Mammary epithelial cell (primary cell): ENCODE measurements at regions of chr6 and their contacts with region 1.

Region 1: DNA sequence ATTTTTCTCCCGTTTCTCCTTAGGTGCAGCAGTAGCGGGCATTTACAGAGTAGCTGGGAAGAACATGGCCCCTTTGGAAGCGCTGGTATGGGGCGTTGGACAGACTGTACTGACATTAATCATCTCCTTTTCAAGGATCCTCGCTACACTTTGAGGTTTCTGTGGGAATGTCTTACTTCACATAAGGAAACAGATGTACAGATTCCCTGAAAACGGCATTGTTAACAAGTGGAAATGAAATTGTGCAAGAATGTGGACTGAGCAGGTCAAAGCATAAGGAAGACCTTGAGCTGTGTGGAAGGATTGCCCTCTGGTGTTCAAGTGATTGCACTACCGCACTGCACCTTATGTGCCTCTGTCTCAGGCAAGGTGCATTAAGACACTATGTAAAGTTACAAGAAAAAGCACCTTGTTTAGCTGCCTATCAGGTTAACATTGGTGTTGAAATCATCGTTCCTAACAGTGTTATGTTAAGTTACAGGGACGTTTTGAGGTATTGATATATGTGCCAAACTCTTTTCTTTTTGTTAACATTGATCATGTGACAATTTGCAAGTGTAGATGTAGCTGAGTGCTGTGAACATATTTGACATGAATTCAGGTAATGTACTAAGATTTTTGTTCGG is 38.0 kb downstream of the TMEM170B start:
- DNase-seq: peak; percentile 67
- H3K4me3 ChIP-seq: no peak overlapping the region
- H3K27ac ChIP-seq: no peak overlapping the region
- H3K4me1 ChIP-seq: no peaks in the 10 kb centered on the region
- H3K27me3 ChIP-seq: no peaks in the 10 kb centered on the region
- CTCF ChIP-seq: peak; percentile 98 to 99

Region 2: GRCh38 chr6:10478187-10479040 is 1097.1 kb before region 1 on chr6:
- CTCF ChIA-PET with region 1: no interaction called
- dilution Hi-C with region 1: no loop called
- in situ Hi-C with region 1: no loop called
- intact Hi-C with region 1: loop called (anchors 1 kb)
- DNase-seq: peak; percentile 30
- H3K4me3 ChIP-seq: no peak overlapping the region
- H3K27ac ChIP-seq: no peak overlapping the region
- H3K4me1 ChIP-seq: peaks cover 14% of the 10 kb centered on the region
- H3K27me3 ChIP-seq: no peaks in the 10 kb centered on the region
- CTCF ChIP-seq: peak; percentile 53 to 54

Region 3: DNA sequence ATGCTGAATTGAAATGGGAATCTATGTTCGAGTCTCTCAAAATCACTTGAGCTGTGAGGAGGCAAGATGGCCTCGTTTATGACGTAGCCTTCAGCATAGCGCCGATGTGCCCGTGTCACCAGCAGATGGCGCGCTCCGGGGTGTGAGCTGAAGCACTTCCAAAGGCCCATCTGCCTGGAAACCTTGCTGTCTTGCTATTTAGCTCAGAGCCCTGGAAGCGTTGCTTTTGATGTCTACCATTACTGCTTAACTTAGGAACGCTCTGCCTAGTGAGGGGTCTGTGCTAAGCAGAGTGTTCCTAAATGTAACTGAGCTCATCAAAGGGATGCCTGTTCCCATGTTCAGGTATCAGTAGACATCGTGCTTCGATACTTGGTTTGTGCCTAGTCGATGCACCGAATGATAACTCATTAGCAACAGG is 620.9 kb before region 1 on chr6:
- CTCF ChIA-PET with region 1: interaction called, 7 read pairs
- dilution Hi-C with region 1: no loop called
- in situ Hi-C with region 1: loop called in 1 of 2 experiments (anchors 25 kb)
- intact Hi-C with region 1: loop called (anchors 1 kb)
- DNase-seq: peak; percentile 48
- H3K4me3 ChIP-seq: no peak overlapping the region
- H3K27ac ChIP-seq: no peak overlapping the region
- H3K4me1 ChIP-seq: no peaks in the 10 kb centered on the region
- H3K27me3 ChIP-seq: peaks cover 1% of the 10 kb centered on the region
- CTCF ChIP-seq: peak; percentile 93 to 98

Region 4: GRCh38 chr6:11093589-11094410 is 481.7 kb before region 1 on chr6 and contains the start of gene SMIM13:
- CTCF ChIA-PET with region 1: no interaction called
- dilution Hi-C with region 1: no loop called
- in situ Hi-C with region 1: no loop called
- intact Hi-C with region 1: loop called (anchors 10 kb)
- DNase-seq: peak; percentile 95
- H3K4me3 ChIP-seq: peak within 1 kb of the TSS; percentile 81 to 100 (median 89)
- H3K27ac ChIP-seq: peak within 1 kb of the TSS; percentile 87
- H3K4me1 ChIP-seq: peaks cover 12% of the 10 kb centered on the region
- H3K27me3 ChIP-seq: no peaks in the 10 kb centered on the region
- CTCF ChIP-seq: peak; percentile 16 to 42
- total RNA-seq, gene SMIM13: 12.3 to 17.5 TPM

Region 5: GRCh38 chr6:11496152-11497060 is 79.1 kb before region 1 on chr6:
- CTCF ChIA-PET with region 1: interaction called, 4 read pairs
- dilution Hi-C with region 1: no loop called
- in situ Hi-C with region 1: no loop called
- intact Hi-C with region 1: loop called (anchors 2 kb)
- DNase-seq: peak; percentile 60
- H3K4me3 ChIP-seq: no peak overlapping the region
- H3K27ac ChIP-seq: peak overlapping the region; percentile 3
- H3K4me1 ChIP-seq: peaks cover 8% of the 10 kb centered on the region
- H3K27me3 ChIP-seq: no peaks in the 10 kb centered on the region
- CTCF ChIP-seq: peak; percentile 73 to 85

Region 6: GRCh38 chr6:12890171-12890790 is 1314.8 kb after region 1 on chr6:
- CTCF ChIA-PET with region 1: no interaction called
- dilution Hi-C with region 1: no loop called
- in situ Hi-C with region 1: loop called in 1 of 2 experiments (anchors 25 kb)
- intact Hi-C with region 1: no loop called
- DNase-seq: no peak
- H3K4me3 ChIP-seq: no peak overlapping the region
- H3K27ac ChIP-seq: no peak overlapping the region
- H3K4me1 ChIP-seq: no peaks in the 10 kb centered on the region
- H3K27me3 ChIP-seq: no peaks in the 10 kb centered on the region
- CTCF ChIP-seq: peak; percentile 53 to 59